AG04449 (cell line): ENCODE measurements at regions of chr3 and their contacts with region 1.

Region 1: GRCh38 chr3:150183678-150184425 is 213.2 kb upstream of the PFN2 start:
- DNase-seq: peak; percentile 40
- H3K4me3 ChIP-seq: peak overlapping the region; percentile 52
- CTCF ChIP-seq: peak; percentile 75

Region 2: GRCh38 chr3:149507491-149508324 is 676.1 kb before region 1 on chr3:
- CTCF ChIA-PET with region 1: no interaction called
- POLR2A ChIA-PET with region 1: no interaction called
- DNase-seq: no peak
- H3K4me3 ChIP-seq: no peak overlapping the region
- CTCF ChIP-seq: no peak

Region 3: DNA sequence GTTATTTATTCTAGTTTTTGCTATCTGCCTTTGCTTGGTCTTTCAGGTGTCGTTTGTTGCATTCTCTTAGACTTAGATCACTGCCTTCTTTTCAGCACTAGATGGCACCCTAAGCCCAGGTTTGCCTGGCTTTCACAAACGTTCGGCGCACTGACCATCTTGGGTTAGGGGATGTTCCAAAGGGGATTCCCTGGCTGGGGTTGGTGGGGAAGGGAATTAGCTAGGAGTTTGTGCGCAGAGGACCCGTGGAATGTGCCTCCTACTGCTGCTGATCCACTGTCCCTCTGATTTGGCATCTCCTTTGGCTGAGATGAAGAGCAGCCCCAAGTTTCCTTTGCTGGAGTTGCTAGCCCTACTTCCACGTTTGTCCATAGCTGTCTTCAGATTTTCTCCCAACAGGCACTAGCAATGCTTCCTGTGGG is 247.0 kb before region 1 on chr3:
- CTCF ChIA-PET with region 1: interaction called, 52 read pairs
- POLR2A ChIA-PET with region 1: no interaction called
- DNase-seq: no peak
- H3K4me3 ChIP-seq: no peak overlapping the region
- CTCF ChIP-seq: peak; percentile 72

Region 4: GRCh38 chr3:149969940-149970715 is 213.7 kb before region 1 on chr3:
- CTCF ChIA-PET with region 1: interaction called, 155 read pairs
- POLR2A ChIA-PET with region 1: interaction called, 9 read pairs
- DNase-seq: no peak
- H3K4me3 ChIP-seq: peak overlapping the region; percentile 83
- CTCF ChIP-seq: no peak

Region 5: DNA sequence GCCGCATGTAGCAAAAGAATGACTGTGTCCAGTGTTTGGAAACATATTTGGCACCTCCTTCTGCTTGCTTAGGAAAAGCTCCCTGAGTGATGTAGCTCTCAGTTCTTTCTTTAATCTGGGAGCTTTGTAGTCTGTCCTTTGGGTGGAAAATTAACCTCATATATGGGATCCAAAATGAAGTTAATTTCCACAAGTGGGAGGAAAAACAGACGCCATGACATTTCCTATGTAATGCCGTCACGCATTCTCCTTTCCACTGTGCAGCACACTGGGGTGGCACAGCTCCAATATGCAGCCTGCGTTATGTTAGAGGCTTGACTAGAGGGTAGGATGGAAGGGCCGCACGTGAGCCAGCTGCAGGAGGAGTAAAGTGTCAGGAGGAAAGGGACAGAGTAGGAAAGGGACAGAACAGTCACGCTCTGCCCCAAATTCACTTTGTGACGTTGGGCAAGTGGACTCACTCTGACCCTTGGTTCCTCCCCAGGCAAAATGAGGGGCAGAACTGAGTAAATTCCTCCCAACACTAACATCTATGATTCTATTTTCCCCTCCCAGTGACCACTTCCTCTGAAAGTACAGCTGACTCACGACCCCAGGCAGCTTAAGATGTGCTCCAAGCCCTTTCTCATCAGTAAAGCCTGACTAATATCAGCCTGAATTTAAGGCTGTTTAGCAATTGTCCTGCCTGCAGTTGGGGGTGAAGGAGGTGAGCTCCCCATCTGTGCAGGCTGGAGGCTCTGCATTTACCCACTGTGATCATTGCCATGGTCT is 36.7 kb before region 1 on chr3:
- CTCF ChIA-PET with region 1: interaction called, 19 read pairs
- POLR2A ChIA-PET with region 1: no interaction called
- DNase-seq: peak; percentile 69
- H3K4me3 ChIP-seq: peak overlapping the region; percentile 13; the same call in 1 of the 2 replicates
- CTCF ChIP-seq: no peak

Region 6: DNA sequence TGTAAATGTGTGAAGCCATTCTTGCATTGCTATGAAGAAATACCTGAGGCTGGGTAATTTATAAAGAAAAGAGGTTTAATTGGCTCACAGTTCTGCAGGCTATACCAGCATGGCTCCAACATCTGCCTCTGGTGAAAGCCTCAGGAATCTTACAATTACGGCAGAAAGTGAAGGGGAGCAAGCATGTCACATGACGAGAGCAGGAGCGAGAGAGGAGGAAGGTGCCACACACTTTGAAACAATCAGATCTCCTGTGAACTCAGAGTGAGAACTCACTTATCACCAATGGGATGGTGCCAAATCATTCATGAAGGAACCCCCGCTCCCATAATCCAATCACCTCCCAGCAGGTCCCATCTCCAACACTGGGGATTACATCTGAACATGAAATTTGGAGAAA is 10.7 kb after region 1 on chr3:
- CTCF ChIA-PET with region 1: interaction called, 11 read pairs
- POLR2A ChIA-PET with region 1: no interaction called
- DNase-seq: no peak
- H3K4me3 ChIP-seq: no peak overlapping the region
- CTCF ChIP-seq: no peak